Left cardiac atrium (tissue), 4 donors: ENCODE measurements at regions of chr14 and their contacts with region 1.

Region 1: GRCh38 chr14:31106768-31107167 is 80.6 kb upstream of the STRN3 start:
- DNase-seq: no peak
- ATAC-seq: no peak

Region 2: DNA sequence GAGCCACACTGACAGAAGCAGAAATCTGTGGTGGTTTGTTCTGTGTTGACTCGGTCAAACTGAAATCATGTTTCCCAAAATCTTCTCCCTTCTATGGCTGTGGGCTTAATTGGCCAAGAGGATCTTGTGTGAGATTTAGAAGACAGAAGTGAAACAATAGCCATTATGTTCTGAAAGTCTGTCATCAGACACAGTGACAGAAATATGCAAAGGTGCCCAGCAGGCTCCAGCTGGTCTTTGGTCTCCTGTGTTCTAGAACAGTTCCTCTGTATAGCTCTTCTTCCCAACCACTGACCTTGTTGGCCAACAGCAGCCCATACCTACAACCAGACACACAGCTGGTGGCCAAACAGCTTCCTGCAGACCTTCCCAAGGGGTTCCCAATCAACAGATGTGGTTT is 257.4 kb before region 1 on chr14:
- intact Hi-C with region 1: no loop called
- DNase-seq: no peak
- ATAC-seq: no peak

Region 3: DNA sequence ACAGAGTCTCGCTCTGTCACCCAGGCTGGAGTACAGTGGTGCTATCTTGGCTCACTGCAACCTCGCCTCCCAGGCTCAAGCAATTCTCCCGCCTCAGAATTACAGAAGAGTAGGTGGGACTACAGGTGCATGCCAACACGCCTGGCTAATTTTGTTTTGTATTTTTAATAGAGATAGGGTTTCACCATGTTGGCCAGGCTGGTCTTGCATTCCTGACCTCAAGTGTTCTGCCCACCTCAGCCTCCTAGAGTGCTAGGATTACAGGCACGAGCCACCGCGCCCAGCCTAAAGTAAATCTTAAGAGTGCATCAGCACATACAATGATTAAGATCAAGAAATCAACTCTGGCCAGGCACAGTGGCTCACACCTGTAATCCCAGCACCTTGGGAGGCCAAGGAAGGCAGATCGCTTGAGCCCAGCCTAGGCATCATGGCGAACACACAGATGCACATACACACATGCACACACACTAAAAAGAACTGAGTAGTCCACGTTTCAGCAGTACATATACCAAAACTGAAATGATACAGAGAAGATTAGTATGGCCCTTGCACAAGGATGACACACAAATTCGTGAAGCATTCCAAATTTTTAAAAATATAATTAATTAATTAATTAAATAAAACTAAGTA is 35.8 kb after region 1 on chr14:
- intact Hi-C with region 1: loop called (anchors 5 kb)
- DNase-seq: no peak
- ATAC-seq: no peak